Activated CD4-positive, alpha-beta memory T cell treated with anti-CD3 and anti-CD28 coated beads for 36 hours (primary cell): ENCODE measurements at regions of chr19 and their contacts with region 1.

Region 1: GRCh38 chr19:45779231-45780145 is 2.8 kb downstream of the DMPK start:
- DNase-seq: peak; percentile 96
- H3K4me3 Mint-ChIP-seq: peak overlapping the region; percentile 67
- H3K27ac Mint-ChIP-seq: no peak overlapping the region
- H3K4me1 Mint-ChIP-seq: peaks cover 15% of the 10 kb centered on the region
- H3K27me3 Mint-ChIP-seq: peaks cover 15% of the 10 kb centered on the region

Region 2: GRCh38 chr19:45792470-45793177 is 13.1 kb after region 1 on chr19 and contains the start of gene DMWD:
- CTCF ChIA-PET with region 1: interaction called, 4 read pairs
- POLR2A ChIA-PET with region 1: interaction called, 3 read pairs
- intact Hi-C with region 1: loop called (anchors 1 kb)
- DNase-seq: peak; percentile 100
- H3K4me3 Mint-ChIP-seq: peak within 1 kb of the TSS; percentile 94
- H3K27ac Mint-ChIP-seq: peak within 1 kb of the TSS; percentile 79
- H3K4me1 Mint-ChIP-seq: peaks cover 30% of the 10 kb centered on the region
- H3K27me3 Mint-ChIP-seq: peaks cover 18% of the 10 kb centered on the region
- total RNA-seq, gene DMWD: 43.1 to 45.8 TPM

Region 3: DNA sequence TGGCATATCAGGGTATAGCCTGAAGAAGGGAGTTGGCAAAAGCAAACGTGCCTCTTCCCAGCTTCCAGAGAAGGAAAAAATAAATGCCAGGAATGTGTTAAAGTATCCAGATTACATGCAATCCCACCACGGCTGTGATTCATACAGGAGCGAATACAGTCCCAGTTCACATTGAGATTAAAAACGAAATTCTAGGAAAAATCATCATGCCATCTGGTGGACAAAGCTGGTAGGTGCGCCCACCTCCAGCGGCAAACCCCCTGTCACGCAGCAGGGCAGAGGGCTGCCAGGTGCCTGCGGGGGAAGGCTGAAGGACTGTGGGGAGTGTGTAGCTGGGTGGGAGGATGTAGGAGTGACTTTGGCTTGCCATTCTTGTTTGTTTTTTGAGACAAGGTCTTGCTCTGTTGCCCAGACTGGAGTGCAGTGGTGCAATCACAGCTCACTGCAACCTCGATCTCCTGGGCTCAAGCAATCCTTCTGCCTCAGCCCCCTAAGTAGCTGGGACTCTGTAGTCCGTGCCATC is 19.6 kb after region 1 on chr19:
- CTCF ChIA-PET with region 1: interaction called, 22 read pairs
- POLR2A ChIA-PET with region 1: no interaction called
- intact Hi-C with region 1: no loop called
- DNase-seq: peak; percentile 71
- H3K4me3 Mint-ChIP-seq: peak overlapping the region; percentile 3
- H3K27ac Mint-ChIP-seq: peak overlapping the region; percentile 23
- H3K4me1 Mint-ChIP-seq: peaks cover 10% of the 10 kb centered on the region
- H3K27me3 Mint-ChIP-seq: peaks cover 34% of the 10 kb centered on the region